Calu3 (cell line): ENCODE measurements at regions of chr6 and their contacts with region 1.

Region 1: GRCh38 chr6:157314705-157315321 is 8.5 kb downstream of the TMEM242 start:
- DNase-seq: no peak
- H3K4me3 Mint-ChIP-seq: no peak overlapping the region
- H3K27ac Mint-ChIP-seq: no peak overlapping the region
- H3K4me1 Mint-ChIP-seq: peaks cover 15% of the 10 kb centered on the region
- H3K27me3 Mint-ChIP-seq: no peaks in the 10 kb centered on the region
- CTCF ChIP-seq: peak; percentile 27

Region 2: GRCh38 chr6:156963712-156964700 is 350.8 kb before region 1 on chr6:
- CTCF ChIA-PET with region 1: no interaction called
- intact Hi-C with region 1: no loop called
- DNase-seq: no peak
- H3K4me3 Mint-ChIP-seq: no peak overlapping the region
- H3K27ac Mint-ChIP-seq: no peak overlapping the region
- H3K4me1 Mint-ChIP-seq: no peaks in the 10 kb centered on the region
- H3K27me3 Mint-ChIP-seq: no peaks in the 10 kb centered on the region
- CTCF ChIP-seq: no peak

Region 3: DNA sequence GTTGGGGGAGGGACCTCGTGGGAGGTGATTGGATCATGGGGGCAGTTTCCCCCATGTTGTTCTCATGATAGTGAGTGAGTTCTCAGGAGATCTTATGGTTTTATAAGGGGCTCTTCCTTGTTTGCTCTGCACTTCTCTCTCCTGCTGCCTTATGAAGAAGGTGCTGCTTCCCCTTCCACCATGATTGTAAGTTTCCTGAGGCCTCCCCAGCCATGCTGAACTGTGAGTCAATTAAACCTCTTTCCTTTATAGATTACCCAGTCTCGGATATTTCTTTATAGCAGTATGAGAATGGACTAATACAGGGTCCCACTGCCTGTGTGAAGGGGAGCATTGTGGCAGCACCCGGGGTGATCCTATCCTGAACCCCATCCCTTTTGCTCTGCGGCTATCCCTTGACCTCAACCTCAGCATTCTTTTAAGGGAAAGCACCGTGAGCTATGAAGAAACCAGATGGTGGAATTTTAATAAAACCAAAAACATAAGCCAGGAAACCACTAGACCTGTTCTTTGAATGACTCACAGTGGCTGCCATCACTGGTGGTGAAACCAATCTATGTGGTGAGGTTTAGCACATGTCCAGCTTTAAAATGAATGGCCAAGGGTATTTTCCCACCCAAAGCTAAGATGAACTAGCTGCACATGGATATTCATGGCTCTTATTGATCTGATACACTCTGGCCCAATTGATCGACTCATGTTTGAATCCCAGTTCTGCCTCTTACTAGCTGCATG is 128.4 kb after region 1 on chr6:
- CTCF ChIA-PET with region 1: no interaction called
- intact Hi-C with region 1: no loop called
- DNase-seq: no peak
- H3K4me3 Mint-ChIP-seq: no peak overlapping the region
- H3K27ac Mint-ChIP-seq: no peak overlapping the region
- H3K4me1 Mint-ChIP-seq: no peaks in the 10 kb centered on the region
- H3K27me3 Mint-ChIP-seq: no peaks in the 10 kb centered on the region
- CTCF ChIP-seq: no peak

Region 4: DNA sequence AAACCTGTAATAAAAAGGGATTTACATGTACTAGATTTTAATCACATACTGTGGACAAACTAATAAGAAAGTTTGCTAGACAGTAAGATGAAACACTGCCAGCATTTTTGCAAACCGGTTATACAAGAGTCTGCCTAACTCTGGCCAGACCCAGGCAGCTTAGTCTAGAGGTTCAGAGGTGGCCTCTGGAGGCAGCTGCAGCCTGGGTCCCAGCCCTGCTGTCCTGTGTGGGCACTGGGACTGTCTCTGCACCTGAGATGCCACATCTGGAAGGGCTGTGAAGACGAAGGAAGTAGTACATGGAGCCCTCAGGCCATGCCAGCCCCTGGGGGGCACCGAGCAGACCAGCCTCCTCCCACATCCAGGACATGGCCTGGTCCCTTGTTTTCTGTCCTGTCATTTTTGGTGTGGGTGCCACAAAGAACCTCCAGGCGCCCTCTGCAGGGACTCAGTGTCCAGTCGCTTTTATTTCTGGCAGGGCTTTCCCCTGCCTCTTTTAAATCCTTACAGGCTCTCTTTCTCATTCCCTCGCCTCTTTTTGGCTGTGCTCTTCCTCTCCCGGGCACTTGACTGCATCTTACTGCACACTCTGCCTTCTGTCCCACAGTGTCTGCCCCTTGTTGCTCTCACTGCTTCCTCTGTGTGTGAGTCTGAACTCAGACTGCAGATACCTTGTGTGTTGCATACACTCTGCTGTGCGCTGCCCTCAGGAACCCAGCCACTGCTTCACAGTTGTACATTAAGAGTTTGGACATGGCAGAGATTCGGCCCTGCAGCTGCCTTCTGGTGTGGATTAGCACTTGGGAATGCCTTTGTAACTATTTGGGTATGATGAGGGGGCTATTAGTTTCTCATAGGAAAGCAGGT is 282.9 kb after region 1 on chr6:
- CTCF ChIA-PET with region 1: interaction called, 5 read pairs
- intact Hi-C with region 1: loop called (anchors 2 kb)
- DNase-seq: peak; percentile 44
- H3K4me3 Mint-ChIP-seq: no peak overlapping the region
- H3K27ac Mint-ChIP-seq: peak overlapping the region; percentile 30
- H3K4me1 Mint-ChIP-seq: peaks cover 17% of the 10 kb centered on the region
- H3K27me3 Mint-ChIP-seq: no peaks in the 10 kb centered on the region
- CTCF ChIP-seq: peak; percentile 39

Region 5: GRCh38 chr6:157614026-157614568 is 299.3 kb after region 1 on chr6:
- CTCF ChIA-PET with region 1: interaction called, 13 read pairs
- intact Hi-C with region 1: loop called (anchors 5 kb)
- DNase-seq: peak; percentile 17
- H3K4me3 Mint-ChIP-seq: peak overlapping the region; percentile 53
- H3K27ac Mint-ChIP-seq: peak overlapping the region; percentile 91
- H3K4me1 Mint-ChIP-seq: peaks cover 37% of the 10 kb centered on the region
- H3K27me3 Mint-ChIP-seq: no peaks in the 10 kb centered on the region
- CTCF ChIP-seq: no peak

Region 6: GRCh38 chr6:157667211-157668008 is 352.6 kb after region 1 on chr6:
- CTCF ChIA-PET with region 1: interaction called, 5 read pairs
- intact Hi-C with region 1: loop called (anchors 1 kb)
- DNase-seq: peak; percentile 44
- H3K4me3 Mint-ChIP-seq: no peak overlapping the region
- H3K27ac Mint-ChIP-seq: peak overlapping the region; percentile 12
- H3K4me1 Mint-ChIP-seq: peaks cover 9% of the 10 kb centered on the region
- H3K27me3 Mint-ChIP-seq: no peaks in the 10 kb centered on the region
- CTCF ChIP-seq: peak; percentile 45